ENCODE measurements at regions of chr13 and their contacts with region 1.

Region 1: GRCh38 chr13:25574437-25575411 is 202.9 kb downstream of the ATP8A2 start:
- DNase-seq: peak; percentile 64 to 68
- ATAC-seq: peak; percentile 91 to 99 (median 97)
- H3K4me3 ChIP-seq: no peak overlapping the region
- H3K27ac ChIP-seq: no peak overlapping the region
- H3K4me1 ChIP-seq: no peaks in the 10 kb centered on the region
- H3K27me3 ChIP-seq: peaks cover 0 to 4% (median 0%) of the 10 kb centered on the region in 3 donors
- CTCF ChIP-seq: peak; percentile 89

Region 2: DNA sequence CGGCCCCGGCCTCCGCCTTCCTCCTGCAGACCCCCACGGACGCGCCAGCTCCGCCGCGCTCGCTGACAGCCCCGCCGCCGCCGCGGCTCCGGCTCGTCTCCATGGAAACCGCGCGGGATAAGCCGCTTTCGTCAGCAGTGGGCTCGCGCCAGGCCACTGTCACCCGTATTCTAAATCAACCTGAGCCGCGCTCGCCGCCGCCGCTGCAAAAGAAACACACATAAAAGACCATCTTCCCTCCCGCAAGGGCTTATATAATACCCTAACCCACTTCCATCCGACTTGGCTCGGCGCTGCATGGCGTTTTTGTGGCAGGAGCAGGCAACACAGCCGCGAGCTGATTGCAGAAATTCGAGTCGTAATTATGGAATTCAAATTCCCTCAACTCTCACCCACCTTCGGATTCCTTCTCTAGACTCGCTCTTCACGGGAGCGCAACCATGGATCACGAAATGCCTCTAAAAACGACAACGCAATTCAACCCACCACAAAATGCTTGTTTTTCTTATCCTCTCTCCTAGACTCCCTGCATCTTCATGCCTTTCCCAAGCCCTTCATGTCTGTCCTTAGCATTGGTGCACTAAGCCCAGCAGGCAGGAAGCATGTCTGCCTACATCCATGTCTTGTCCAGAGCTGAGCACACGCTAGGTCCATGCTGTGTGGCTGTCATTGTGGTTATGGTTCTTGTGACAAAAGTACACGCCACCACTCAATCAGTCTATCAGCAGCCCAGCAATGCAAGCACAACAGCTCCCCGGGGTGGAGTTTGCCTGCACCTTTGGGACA is 403.0 kb before region 1 on chr13 and contains the start of gene AMER2:
- intact Hi-C with region 1: no loop called
- DNase-seq: no peak
- ATAC-seq: no peak
- H3K4me3 ChIP-seq: peak within 1 kb of the TSS; percentile 47
- H3K27ac ChIP-seq: no peak within 1 kb of the TSS
- H3K4me1 ChIP-seq: no peaks in the 10 kb centered on the region
- H3K27me3 ChIP-seq: peaks cover 0 to 55% (median 23%) of the 10 kb centered on the region in 3 donors
- CTCF ChIP-seq: no peak
- total RNA-seq, gene AMER2: 0.04 TPM in 1 of 4 donors, not detected in the others

Region 3: GRCh38 chr13:25796466-25796865 is 221.7 kb after region 1 on chr13:
- intact Hi-C with region 1: loop called in 1 of 2 experiments (anchors 5 kb)
- DNase-seq: no peak
- ATAC-seq: no peak
- H3K4me3 ChIP-seq: no peak overlapping the region
- H3K27ac ChIP-seq: no peak overlapping the region
- H3K4me1 ChIP-seq: no peaks in the 10 kb centered on the region
- H3K27me3 ChIP-seq: no peaks in the 10 kb centered on the region
- CTCF ChIP-seq: no peak

Region 4: GRCh38 chr13:25860845-25861244 is 286.1 kb after region 1 on chr13:
- intact Hi-C with region 1: loop called in 1 of 2 experiments (anchors 10 kb)
- DNase-seq: no peak
- ATAC-seq: no peak
- H3K4me3 ChIP-seq: no peak overlapping the region
- H3K27ac ChIP-seq: no peak overlapping the region
- H3K4me1 ChIP-seq: no peaks in the 10 kb centered on the region
- H3K27me3 ChIP-seq: no peaks in the 10 kb centered on the region
- CTCF ChIP-seq: no peak

Region 5: GRCh38 chr13:25977216-25977615 is 402.5 kb after region 1 on chr13:
- intact Hi-C with region 1: loop called in 1 of 2 experiments (anchors 10 kb)
- DNase-seq: no peak
- ATAC-seq: no peak
- H3K4me3 ChIP-seq: no peak overlapping the region
- H3K27ac ChIP-seq: no peak overlapping the region
- H3K4me1 ChIP-seq: peaks cover 19% of the 10 kb centered on the region
- H3K27me3 ChIP-seq: no peaks in the 10 kb centered on the region
- CTCF ChIP-seq: no peak

Region 6: GRCh38 chr13:26062844-26063444 is 488.2 kb after region 1 on chr13:
- intact Hi-C with region 1: loop called in 1 of 2 experiments (anchors 1 kb)
- DNase-seq: no peak
- ATAC-seq: peak; percentile 61 to 89 (median 74)
- H3K4me3 ChIP-seq: no peak overlapping the region
- H3K27ac ChIP-seq: no peak overlapping the region
- H3K4me1 ChIP-seq: peaks cover 5% of the 10 kb centered on the region
- H3K27me3 ChIP-seq: no peaks in the 10 kb centered on the region
- CTCF ChIP-seq: peak; percentile 72

Region 7: GRCh38 chr13:26068372-26069159 is 493.8 kb after region 1 on chr13:
- intact Hi-C with region 1: loop called (anchors 1 to 2 kb)
- DNase-seq: no peak
- ATAC-seq: no peak
- H3K4me3 ChIP-seq: no peak overlapping the region
- H3K27ac ChIP-seq: no peak overlapping the region
- H3K4me1 ChIP-seq: no peaks in the 10 kb centered on the region
- H3K27me3 ChIP-seq: no peaks in the 10 kb centered on the region
- CTCF ChIP-seq: no peak

Region 8: DNA sequence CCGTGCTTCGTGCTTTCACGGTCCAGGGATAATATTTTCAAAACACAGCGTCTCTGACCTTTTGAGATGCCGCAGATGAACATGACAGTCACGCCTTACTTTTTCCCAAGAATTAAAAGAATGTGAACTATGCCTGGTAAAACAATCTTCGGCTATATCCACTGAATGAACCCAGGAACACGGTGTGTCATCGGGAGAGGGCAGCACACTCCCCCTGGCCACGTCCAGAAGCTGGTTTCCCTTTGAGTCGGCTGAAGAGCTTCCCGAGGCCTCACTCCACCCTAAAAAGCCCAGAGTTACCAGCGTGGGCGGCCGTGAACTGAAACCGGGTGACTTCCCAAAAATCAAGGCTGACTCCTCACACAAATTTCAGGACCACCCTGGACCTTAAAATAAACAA is 500.0 kb after region 1 on chr13:
- intact Hi-C with region 1: loop called in 1 of 2 experiments (anchors 2 kb)
- DNase-seq: no peak
- ATAC-seq: no peak
- H3K4me3 ChIP-seq: no peak overlapping the region
- H3K27ac ChIP-seq: no peak overlapping the region
- H3K4me1 ChIP-seq: no peaks in the 10 kb centered on the region
- H3K27me3 ChIP-seq: peaks cover 0 to 2% (median 0%) of the 10 kb centered on the region in 3 donors
- CTCF ChIP-seq: no peak

Region 9: DNA sequence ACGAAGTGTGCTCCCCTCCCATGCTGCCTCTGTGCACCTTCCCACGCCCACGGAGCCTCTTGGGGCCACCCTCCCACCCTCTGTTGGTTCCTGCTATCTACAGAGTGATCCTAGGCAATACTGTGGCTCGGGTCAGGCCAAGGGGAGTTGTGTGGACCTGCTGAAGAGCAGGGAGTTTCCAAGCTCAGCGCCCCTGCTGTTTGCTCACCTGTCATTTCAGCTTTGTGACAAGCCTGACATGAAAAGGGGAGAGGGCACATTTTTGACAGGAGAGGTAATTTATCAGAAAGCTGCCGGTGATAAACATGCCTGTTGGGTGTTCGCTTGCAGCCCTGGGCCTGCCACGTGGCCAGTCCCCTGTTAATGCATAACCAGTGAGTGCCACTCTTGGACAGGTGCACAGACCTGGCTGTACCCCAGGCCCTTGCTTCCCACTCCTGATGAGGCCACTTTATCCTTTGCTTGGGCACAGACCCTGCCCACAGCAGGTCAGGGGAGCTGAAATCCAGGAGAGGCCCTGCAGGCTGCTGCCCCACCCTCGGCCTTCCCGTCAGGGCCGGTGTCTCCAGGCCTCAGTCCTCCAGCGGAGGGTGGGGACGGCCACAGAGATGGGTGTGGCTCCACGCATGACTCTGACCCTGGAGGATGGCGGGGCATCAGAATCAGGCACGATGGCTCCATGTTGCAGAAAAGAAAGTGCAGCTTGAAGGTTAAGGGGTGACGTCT is 1387.3 kb after region 1 on chr13:
- intact Hi-C with region 1: no loop called
- DNase-seq: no peak
- ATAC-seq: no peak
- H3K4me3 ChIP-seq: no peak overlapping the region
- H3K27ac ChIP-seq: no peak overlapping the region
- H3K4me1 ChIP-seq: no peaks in the 10 kb centered on the region
- H3K27me3 ChIP-seq: peaks cover 0 to 14% (median 2%) of the 10 kb centered on the region in 3 donors
- CTCF ChIP-seq: no peak

Measured in psoas muscle (tissue), 8 donors.